ENCODE measurements at regions of chr5 and their contacts with region 1.

Region 1: DNA sequence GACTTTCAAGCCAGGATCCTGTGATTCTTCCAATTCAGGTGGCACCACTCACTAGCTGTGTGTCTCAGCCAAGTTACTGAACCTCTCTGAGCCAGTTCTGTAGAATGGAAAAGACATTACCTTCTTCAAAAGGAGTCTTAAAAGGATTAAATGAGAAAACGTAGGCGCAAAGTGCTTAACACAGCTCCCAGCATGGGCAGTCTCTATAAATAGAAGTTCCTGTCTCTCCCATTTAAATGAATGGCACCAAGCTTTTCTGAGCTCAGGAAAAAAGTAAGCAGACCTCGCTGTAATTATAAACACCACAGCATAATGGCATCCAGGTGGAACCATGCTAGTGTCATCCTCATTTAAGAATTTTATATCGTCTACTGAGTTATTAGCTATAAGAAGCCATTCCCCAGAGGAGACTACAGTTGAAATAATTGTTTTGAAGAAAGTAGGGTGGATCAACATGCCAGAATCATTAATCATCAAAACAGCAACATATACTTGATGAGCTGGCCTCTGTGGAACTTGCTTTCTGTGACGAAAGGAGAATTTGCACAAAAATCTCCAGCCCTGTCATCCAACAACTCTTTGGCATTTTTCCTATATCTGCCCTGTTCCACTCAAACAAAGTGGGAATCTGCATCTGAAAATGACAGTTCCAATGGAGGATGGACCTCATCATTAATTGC is 188.9 kb downstream of the SPOCK1 start:
- DNase-seq: peak; percentile 88
- H3K4me3 Mint-ChIP-seq: peak overlapping the region; percentile 18
- H3K27ac Mint-ChIP-seq: peak overlapping the region; percentile 95
- H3K4me1 Mint-ChIP-seq: peaks cover 28% of the 10 kb centered on the region
- H3K27me3 Mint-ChIP-seq: no peaks in the 10 kb centered on the region
- CTCF ChIP-seq: no peak

Region 2: DNA sequence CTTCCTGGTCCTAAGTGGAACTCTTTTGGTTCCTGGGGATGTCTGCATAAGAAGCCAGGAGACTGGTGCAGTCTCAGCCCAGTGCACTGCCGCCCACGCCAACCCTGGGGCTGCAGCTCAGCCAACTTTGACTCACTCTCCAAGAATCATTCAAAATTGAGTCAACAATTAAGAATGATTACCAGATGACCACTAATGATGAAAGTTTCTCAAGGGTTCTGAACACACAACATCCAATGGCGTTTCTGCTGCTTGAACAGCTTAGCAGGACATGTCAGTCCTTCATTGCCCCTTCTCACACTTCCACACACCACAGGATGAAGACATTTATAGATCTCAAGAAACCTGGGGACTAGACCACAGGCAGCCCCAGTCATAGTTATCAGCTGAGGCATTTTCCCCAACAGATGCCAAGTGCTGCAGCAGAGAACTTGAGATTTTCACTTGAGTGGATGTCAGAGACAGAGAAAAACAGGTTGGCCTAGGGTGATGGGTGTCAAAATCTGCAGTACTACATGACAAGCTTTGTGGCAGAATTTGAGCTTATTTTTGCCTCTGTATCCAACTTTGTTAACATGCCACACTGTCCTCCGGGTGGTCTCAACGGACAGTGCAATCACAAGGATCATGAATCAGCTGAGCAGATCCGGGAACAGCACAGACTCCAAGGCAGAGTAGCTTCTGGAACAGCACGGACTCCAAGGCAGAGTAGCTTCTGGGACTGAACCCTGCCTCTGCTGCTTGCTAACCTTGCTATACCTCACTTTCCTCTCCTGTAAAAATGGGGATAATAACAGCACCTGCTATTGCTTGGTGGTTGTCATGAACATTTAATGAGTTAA is 167.2 kb before region 1 on chr5:
- CTCF ChIA-PET with region 1: interaction called, 3 read pairs
- POLR2A ChIA-PET with region 1: interaction called, 4 read pairs
- intact Hi-C with region 1: loop called (anchors 5 kb)
- DNase-seq: peak; percentile 87
- H3K4me3 Mint-ChIP-seq: no peak overlapping the region
- H3K27ac Mint-ChIP-seq: peak overlapping the region; percentile 76
- H3K4me1 Mint-ChIP-seq: peaks cover 52% of the 10 kb centered on the region
- H3K27me3 Mint-ChIP-seq: no peaks in the 10 kb centered on the region
- CTCF ChIP-seq: no peak

Region 3: GRCh38 chr5:137234973-137235943 is 74.9 kb before region 1 on chr5:
- CTCF ChIA-PET with region 1: no interaction called
- POLR2A ChIA-PET with region 1: no interaction called
- intact Hi-C with region 1: loop called (anchors 2 kb)
- DNase-seq: peak; percentile 68
- H3K4me3 Mint-ChIP-seq: no peak overlapping the region
- H3K27ac Mint-ChIP-seq: peak overlapping the region; percentile 53
- H3K4me1 Mint-ChIP-seq: peaks cover 26% of the 10 kb centered on the region
- H3K27me3 Mint-ChIP-seq: no peaks in the 10 kb centered on the region
- CTCF ChIP-seq: no peak

Region 4: DNA sequence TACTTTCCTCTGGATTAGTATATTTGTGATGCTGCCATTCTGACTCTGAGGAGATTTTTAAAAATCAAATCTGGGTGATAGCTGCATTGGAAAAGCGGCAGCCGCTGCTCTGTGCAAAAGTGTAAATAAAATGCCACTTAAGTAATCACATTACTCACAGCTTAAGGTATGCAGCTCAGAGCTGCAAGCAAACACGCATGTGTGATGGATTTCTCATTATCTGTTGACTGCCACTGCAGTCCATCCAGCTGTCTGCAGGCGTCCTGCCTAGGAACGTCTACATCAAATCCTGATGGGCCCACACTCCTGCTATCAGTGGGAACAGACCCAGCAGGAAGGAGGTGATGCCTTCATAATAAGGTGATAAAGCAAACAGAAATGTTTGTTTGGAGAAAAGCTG is 28.0 kb before region 1 on chr5:
- CTCF ChIA-PET with region 1: no interaction called
- POLR2A ChIA-PET with region 1: no interaction called
- intact Hi-C with region 1: no loop called
- DNase-seq: peak; percentile 34
- H3K4me3 Mint-ChIP-seq: no peak overlapping the region
- H3K27ac Mint-ChIP-seq: no peak overlapping the region
- H3K4me1 Mint-ChIP-seq: peaks cover 9% of the 10 kb centered on the region
- H3K27me3 Mint-ChIP-seq: no peaks in the 10 kb centered on the region
- CTCF ChIP-seq: no peak

Region 5: DNA sequence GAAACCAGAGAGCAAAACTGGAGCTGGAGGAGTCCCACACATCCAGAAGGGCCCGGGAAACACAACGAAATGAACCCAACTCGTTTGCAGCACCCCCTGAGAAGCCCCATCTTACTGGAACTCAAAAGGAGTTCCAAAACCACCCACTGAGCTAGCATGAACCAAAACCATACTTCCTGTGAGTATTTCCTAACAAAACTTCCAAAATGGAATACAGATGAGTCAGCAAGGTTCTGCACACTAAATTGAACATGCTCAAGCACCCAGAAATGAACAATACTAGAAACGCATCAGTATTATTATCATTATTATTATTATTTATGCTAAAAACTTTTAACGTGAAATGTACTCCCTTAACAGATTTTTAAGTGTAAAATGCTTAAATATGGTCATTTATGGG is 197.0 kb after region 1 on chr5:
- CTCF ChIA-PET with region 1: no interaction called
- POLR2A ChIA-PET with region 1: no interaction called
- intact Hi-C with region 1: no loop called
- DNase-seq: peak; percentile 23
- H3K4me3 Mint-ChIP-seq: no peak overlapping the region
- H3K27ac Mint-ChIP-seq: no peak overlapping the region
- H3K4me1 Mint-ChIP-seq: no peaks in the 10 kb centered on the region
- H3K27me3 Mint-ChIP-seq: peaks cover 8% of the 10 kb centered on the region
- CTCF ChIP-seq: no peak

Measured in MCF 10A (cell line).